ENCODE measurements at regions of chr1 and their contacts with region 1.

Region 1: GRCh38 chr1:119870917-119871596 is 25.3 kb downstream of the ADAM30 start:
- DNase-seq: peak; percentile 61 to 86
- H3K4me3 ChIP-seq: peak overlapping the region; percentile 21; the same call in 1 of the 2 replicates
- H3K27ac ChIP-seq: no peak overlapping the region
- H3K4me1 ChIP-seq: no peaks in the 10 kb centered on the region
- H3K27me3 ChIP-seq: no peaks in the 10 kb centered on the region
- CTCF ChIP-seq: peak; percentile 99

Region 2: DNA sequence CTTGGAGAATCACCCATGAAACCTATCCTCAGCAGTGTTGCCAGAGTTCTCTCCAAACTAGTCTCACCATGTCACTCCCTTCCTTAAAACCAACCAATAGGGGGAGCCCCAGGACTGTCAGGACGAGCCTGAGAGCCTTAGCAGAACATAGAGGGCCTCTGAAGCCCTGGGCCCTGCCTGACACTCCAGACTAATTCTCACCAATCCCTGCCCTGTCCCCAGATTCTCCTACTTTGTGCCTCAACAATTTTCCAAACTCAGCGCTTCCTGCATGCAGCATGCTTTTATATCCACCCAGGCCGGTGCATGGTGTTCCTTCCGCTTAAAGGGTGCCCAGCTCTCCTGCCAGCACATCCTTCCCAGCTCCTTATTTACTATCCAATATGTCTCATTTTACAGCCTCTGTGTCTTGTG is 321.3 kb before region 1 on chr1:
- CTCF ChIA-PET with region 1: interaction called, 4 read pairs
- POLR2A ChIA-PET with region 1: no interaction called
- intact Hi-C with region 1: loop called (anchors 1 kb)
- DNase-seq: peak; percentile 51 to 59
- H3K4me3 ChIP-seq: no peak overlapping the region
- H3K27ac ChIP-seq: no peak overlapping the region
- H3K4me1 ChIP-seq: peaks cover 13% of the 10 kb centered on the region
- H3K27me3 ChIP-seq: no peaks in the 10 kb centered on the region
- CTCF ChIP-seq: peak; percentile 76

Region 3: GRCh38 chr1:119631433-119632102 is 239.5 kb before region 1 on chr1:
- CTCF ChIA-PET with region 1: no interaction called
- POLR2A ChIA-PET with region 1: no interaction called
- intact Hi-C with region 1: no loop called
- DNase-seq: no peak
- H3K4me3 ChIP-seq: no peak overlapping the region
- H3K27ac ChIP-seq: no peak overlapping the region
- H3K4me1 ChIP-seq: no peaks in the 10 kb centered on the region
- H3K27me3 ChIP-seq: no peaks in the 10 kb centered on the region
- CTCF ChIP-seq: no peak

Region 4: GRCh38 chr1:119743781-119744597 is 127.1 kb before region 1 on chr1:
- CTCF ChIA-PET with region 1: no interaction called
- POLR2A ChIA-PET with region 1: no interaction called
- intact Hi-C with region 1: loop called (anchors 2 kb)
- DNase-seq: peak; percentile 55 to 58
- H3K4me3 ChIP-seq: no peak overlapping the region
- H3K27ac ChIP-seq: no peak overlapping the region
- H3K4me1 ChIP-seq: no peaks in the 10 kb centered on the region
- H3K27me3 ChIP-seq: no peaks in the 10 kb centered on the region
- CTCF ChIP-seq: peak; percentile 99

Region 5: DNA sequence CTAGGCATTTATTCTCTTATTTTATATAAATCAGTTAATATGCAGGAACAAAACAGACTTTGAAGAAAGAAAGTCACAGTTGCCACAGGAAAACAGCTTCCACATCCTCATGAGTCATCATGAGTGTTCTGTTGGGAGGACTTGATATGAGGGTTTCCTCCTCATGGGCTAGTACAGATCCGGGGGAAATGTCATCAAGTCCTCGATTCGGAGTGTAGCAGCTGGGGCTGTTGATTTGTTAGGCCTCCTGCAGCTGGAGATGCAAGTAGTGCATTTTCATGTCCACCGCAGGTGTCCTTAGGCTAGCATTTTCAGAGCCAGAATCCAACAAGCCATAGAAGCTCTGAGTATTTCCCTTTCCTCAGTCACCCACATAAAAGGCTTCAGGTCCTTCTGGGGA is 11.4 kb before region 1 on chr1:
- CTCF ChIA-PET with region 1: no interaction called
- POLR2A ChIA-PET with region 1: interaction called, 13 read pairs
- intact Hi-C with region 1: no loop called
- DNase-seq: peak; percentile 14 to 86
- H3K4me3 ChIP-seq: no peak overlapping the region; the same call in 1 of the 2 replicates
- H3K27ac ChIP-seq: peak overlapping the region; percentile 56
- H3K4me1 ChIP-seq: peaks cover 16% of the 10 kb centered on the region
- H3K27me3 ChIP-seq: no peaks in the 10 kb centered on the region
- CTCF ChIP-seq: no peak

Region 6: GRCh38 chr1:119885903-119886783 is 15.1 kb after region 1 on chr1:
- CTCF ChIA-PET with region 1: no interaction called
- POLR2A ChIA-PET with region 1: no interaction called
- intact Hi-C with region 1: no loop called
- DNase-seq: peak in 1 of 2 experiments; percentile 49
- H3K4me3 ChIP-seq: no peak overlapping the region
- H3K27ac ChIP-seq: no peak overlapping the region
- H3K4me1 ChIP-seq: no peaks in the 10 kb centered on the region
- H3K27me3 ChIP-seq: no peaks in the 10 kb centered on the region
- CTCF ChIP-seq: peak; percentile 93

Region 7: DNA sequence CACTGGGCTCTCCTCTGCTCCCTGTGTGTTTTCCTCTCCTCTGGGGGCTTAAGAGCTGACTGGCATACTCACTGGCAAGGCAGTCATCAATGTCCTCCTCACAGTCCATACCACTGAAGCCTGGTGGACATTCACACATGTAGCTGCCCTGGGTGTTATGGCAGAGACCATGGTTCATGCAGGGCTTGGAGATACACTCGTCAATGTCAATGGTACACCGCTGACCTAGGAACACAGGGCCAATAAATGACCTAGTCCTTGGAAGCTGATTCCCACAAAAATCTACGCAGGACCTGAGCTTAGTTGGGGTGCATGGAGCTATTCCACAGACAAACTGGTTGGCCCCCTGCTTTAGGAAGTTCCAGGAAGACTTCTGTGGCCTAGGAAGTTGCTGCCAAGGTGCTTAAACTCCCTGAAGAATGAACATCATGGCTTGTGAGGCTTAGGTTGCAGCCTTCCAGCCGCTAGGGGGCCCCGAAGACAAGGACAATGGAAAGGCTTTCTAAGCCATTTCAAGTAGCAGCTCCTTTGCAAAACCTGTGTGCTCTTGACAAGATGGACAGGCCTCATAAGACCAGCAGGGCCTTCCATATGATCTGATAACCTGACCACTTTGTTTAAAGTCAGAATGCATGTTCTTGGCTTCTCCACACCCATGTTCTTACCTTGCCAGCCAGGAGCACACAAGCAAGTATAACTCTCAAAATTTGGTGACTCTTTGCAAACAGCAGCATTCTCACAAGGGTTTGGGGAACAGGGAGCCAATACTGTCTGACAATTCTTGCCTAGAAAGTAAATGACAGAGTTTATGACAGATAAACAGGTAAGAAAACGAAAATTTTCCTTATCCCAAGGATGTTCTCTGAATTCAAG is 77.5 kb after region 1 on chr1:
- CTCF ChIA-PET with region 1: no interaction called
- POLR2A ChIA-PET with region 1: no interaction called
- intact Hi-C with region 1: loop called (anchors 5 kb)
- DNase-seq: peak; percentile 70 to 74
- H3K4me3 ChIP-seq: no peak overlapping the region
- H3K27ac ChIP-seq: no peak overlapping the region
- H3K4me1 ChIP-seq: no peaks in the 10 kb centered on the region
- H3K27me3 ChIP-seq: no peaks in the 10 kb centered on the region
- CTCF ChIP-seq: peak; percentile 98